ENCODE measurements at regions of chr19 and their contacts with region 1.

Region 1: DNA sequence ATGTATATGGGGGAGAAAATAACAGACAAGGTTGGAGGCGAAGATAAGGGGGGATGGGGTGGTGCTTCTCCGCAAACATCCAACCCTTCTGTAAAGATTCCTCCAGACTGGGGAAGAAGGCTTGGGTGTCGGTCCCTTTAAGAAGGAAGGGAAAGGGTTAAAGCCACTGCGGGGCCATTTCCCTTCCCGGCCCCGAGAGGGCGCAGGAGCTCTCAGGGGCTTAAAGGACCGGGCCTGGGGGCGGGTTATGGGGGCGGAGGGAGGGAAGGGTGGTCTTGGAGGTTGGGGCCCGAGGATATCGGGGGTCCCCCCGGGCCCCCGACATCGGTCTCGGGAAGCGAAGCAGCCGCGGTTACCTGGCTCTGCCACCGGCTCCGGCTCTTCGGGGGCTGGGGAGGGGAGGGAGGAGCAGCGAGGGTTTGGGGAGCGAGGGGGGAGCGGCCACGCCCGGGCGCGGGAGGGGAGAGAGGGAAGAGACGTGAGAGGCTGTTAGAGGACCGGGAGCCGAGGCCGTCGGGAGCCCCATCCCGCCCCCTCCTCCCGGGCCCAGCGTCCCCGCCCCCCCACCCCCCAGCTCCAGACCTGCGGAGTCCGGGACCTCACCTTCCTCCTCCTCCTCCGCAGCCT is 2.8 kb downstream of the TNNT1 start:
- DNase-seq: peak; percentile 79
- ATAC-seq: peak; percentile 33
- H3K4me3 Mint-ChIP-seq: peak overlapping the region; percentile 65
- H3K27ac Mint-ChIP-seq: no peak overlapping the region
- H3K4me1 Mint-ChIP-seq: peaks cover 39% of the 10 kb centered on the region
- H3K27me3 Mint-ChIP-seq: peaks cover 26% of the 10 kb centered on the region
- CTCF ChIP-seq: peak; percentile 75

Region 2: GRCh38 chr19:55117636-55118391 is 28.4 kb before region 1 on chr19 and contains the start of gene PPP1R12C:
- CTCF ChIA-PET with region 1: interaction called, 28 read pairs
- POLR2A ChIA-PET with region 1: interaction called, 3 read pairs
- DNase-seq: peak; percentile 98
- ATAC-seq: peak; percentile 78
- H3K4me3 Mint-ChIP-seq: peak within 1 kb of the TSS; percentile 98
- H3K27ac Mint-ChIP-seq: peak within 1 kb of the TSS; percentile 97
- H3K4me1 Mint-ChIP-seq: peaks cover 31% of the 10 kb centered on the region
- H3K27me3 Mint-ChIP-seq: peaks cover 21% of the 10 kb centered on the region
- CTCF ChIP-seq: no peak
- total RNA-seq, gene PPP1R12C: 88.4 to 99.3 TPM (median 92.3 TPM) in 3 replicates

Region 3: GRCh38 chr19:55132453-55133129 is 13.6 kb before region 1 on chr19:
- CTCF ChIA-PET with region 1: interaction called, 29 read pairs
- POLR2A ChIA-PET with region 1: interaction called, 6 read pairs
- DNase-seq: no peak
- ATAC-seq: peak; percentile 66
- H3K4me3 Mint-ChIP-seq: no peak overlapping the region
- H3K27ac Mint-ChIP-seq: 0 out of 2 replicates have a peak overlapping the region, but pooled peaks have one; percentile 22
- H3K4me1 Mint-ChIP-seq: peaks cover 23% of the 10 kb centered on the region
- H3K27me3 Mint-ChIP-seq: peaks cover 4% of the 10 kb centered on the region
- CTCF ChIP-seq: no peak

Region 4: DNA sequence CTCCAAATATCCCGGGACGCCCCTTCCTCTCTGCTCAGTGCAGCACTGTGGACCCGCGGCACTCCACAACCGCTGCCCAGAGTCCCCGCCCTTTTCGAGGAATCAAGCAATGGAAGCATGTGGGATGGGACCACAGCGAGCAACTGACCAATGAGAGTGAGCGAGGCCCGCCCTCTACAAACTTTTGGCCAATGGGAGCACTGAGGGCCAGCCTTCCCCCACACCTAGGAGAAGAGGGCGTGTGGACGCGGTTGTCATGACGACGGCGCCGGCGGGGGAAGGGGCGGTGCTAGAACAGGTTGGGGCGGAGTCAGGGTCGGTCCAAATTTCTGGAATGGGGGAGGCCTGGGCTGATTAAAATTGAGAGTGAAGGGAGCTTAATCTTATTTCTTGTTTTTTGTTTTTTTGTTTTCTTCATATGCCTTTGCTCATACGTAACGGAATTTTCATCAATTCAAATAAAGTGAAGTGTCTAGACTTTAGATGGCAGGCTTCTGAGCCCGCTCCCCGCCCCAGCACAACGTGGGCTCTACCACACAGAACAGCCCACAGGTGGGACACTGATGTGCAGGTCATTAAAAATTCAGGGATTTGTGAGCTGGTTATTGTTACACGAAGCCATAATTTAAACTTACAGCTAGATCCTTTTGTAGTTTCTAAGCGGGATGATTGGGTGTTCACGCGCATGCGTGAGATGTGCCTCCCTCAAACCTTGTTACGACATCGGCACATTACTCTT is 20.5 kb after region 1 on chr19 and contains the start of gene DNAAF3:
- CTCF ChIA-PET with region 1: interaction called, 108 read pairs
- POLR2A ChIA-PET with region 1: interaction called, 11 read pairs
- DNase-seq: peak; percentile 98
- ATAC-seq: peak; percentile 95
- H3K4me3 Mint-ChIP-seq: peak within 1 kb of the TSS; percentile 94
- H3K27ac Mint-ChIP-seq: peak within 1 kb of the TSS; percentile 94
- H3K4me1 Mint-ChIP-seq: peaks cover 8% of the 10 kb centered on the region; the same call in 1 of the 2 replicates
- H3K27me3 Mint-ChIP-seq: peaks cover 71% of the 10 kb centered on the region
- CTCF ChIP-seq: no peak
- total RNA-seq, gene DNAAF3: 4.0 to 5.9 TPM (median 5.6 TPM) in 3 replicates

Region 5: DNA sequence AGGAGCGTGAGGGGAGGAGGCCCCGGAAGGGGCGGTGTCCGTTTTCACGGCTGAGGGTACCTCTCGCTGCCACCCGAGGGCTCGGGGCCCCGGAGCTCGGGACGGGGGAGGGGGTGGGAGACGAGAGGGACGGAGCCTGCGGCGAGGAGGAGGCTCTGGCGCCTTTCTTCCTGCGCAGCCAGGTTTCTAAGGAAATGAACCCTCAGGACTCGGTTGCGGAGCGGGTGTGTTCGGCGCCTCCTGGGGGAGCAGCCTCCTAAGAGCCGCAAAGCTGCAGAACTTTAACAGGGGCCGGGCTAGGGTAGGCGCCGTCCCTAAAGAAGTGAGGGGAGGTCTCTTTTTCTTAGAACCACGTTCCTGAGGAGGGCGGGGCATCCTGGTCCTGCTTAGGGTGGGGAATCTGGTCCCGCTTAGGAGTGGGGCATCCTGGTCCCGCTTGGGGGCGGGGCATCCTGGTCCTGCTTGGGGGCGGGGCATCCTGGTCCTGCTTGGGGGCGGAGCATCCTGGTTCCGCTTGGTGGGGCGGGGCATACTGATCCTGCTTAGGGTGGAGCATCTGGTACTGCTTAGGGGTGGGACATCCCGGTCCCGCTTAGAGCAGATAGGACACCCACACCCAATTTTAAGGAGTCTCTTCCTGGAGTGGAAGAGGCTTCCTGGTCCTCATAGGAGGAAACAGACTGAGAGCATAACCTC is 27.7 kb after region 1 on chr19:
- CTCF ChIA-PET with region 1: interaction called, 21 read pairs
- POLR2A ChIA-PET with region 1: no interaction called
- DNase-seq: peak; percentile 96
- ATAC-seq: peak; percentile 93
- H3K4me3 Mint-ChIP-seq: peak overlapping the region; percentile 80
- H3K27ac Mint-ChIP-seq: no peak overlapping the region
- H3K4me1 Mint-ChIP-seq: peaks cover 24% of the 10 kb centered on the region
- H3K27me3 Mint-ChIP-seq: peaks cover 96% of the 10 kb centered on the region
- CTCF ChIP-seq: no peak

Region 6: DNA sequence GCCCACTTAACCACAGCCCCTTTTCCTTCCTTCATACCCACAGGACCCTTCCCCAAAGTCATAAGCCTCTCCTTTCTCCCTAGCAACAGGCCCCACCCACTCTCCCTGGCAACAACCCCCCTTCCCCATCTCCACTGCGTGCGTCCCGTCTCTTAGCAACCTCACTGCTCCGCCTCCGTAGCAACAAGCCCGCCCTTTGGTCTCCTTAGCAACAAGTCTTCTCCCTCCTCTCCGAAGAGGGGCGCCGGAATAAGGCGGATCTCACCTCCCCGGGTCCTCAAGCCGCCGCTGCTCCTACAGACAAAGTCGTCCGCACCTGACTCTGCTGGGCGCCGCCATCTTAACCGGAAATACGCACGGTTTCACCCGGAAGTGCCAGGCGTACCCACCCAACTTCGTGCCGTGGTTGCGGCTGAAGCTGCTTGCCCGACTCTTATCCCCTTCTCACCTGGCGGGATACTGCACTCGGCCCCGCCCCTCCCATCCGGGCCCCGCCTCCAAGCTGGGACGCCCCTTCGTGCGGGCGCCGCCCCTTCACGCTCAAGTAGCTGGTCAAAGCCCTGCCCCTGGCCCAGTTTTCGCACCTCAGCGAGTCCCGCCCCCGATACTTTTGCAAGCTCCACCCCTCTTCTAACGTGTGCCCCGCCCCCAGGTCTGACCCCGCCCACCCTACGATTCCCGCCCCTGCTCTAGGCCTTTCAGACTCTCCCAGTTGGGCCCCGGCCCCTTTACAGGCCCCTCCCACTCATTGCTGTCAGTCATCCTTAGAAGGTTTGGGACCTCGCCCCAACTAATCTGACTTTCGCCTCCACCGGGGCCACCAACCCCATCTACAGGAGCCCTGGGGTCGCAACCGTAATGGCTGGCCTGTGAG is 133.8 kb after region 1 on chr19 and contains the start of gene HSPBP1:
- CTCF ChIA-PET with region 1: interaction called, 12 read pairs
- POLR2A ChIA-PET with region 1: no interaction called
- DNase-seq: peak; percentile 99
- ATAC-seq: peak; percentile 91
- H3K4me3 Mint-ChIP-seq: peak within 1 kb of the TSS; percentile 96
- H3K27ac Mint-ChIP-seq: peak within 1 kb of the TSS; percentile 99
- H3K4me1 Mint-ChIP-seq: peaks cover 18% of the 10 kb centered on the region
- H3K27me3 Mint-ChIP-seq: no peaks in the 10 kb centered on the region
- CTCF ChIP-seq: no peak
- total RNA-seq, gene HSPBP1: 57.1 to 65.2 TPM (median 60.9 TPM) in 3 replicates

Region 7: GRCh38 chr19:55418185-55418584 is 272.0 kb after region 1 on chr19:
- CTCF ChIA-PET with region 1: interaction called, 11 read pairs
- POLR2A ChIA-PET with region 1: no interaction called
- DNase-seq: peak; percentile 71
- ATAC-seq: peak; percentile 97
- H3K4me3 Mint-ChIP-seq: no peak overlapping the region
- H3K27ac Mint-ChIP-seq: no peak overlapping the region; the same call in 1 of the 2 replicates
- H3K4me1 Mint-ChIP-seq: peaks cover 2% of the 10 kb centered on the region
- H3K27me3 Mint-ChIP-seq: peaks cover 78% of the 10 kb centered on the region
- CTCF ChIP-seq: peak; percentile 40